H1 (cell line): ENCODE measurements at regions of chr1 and their contacts with region 1.

Region 1: DNA sequence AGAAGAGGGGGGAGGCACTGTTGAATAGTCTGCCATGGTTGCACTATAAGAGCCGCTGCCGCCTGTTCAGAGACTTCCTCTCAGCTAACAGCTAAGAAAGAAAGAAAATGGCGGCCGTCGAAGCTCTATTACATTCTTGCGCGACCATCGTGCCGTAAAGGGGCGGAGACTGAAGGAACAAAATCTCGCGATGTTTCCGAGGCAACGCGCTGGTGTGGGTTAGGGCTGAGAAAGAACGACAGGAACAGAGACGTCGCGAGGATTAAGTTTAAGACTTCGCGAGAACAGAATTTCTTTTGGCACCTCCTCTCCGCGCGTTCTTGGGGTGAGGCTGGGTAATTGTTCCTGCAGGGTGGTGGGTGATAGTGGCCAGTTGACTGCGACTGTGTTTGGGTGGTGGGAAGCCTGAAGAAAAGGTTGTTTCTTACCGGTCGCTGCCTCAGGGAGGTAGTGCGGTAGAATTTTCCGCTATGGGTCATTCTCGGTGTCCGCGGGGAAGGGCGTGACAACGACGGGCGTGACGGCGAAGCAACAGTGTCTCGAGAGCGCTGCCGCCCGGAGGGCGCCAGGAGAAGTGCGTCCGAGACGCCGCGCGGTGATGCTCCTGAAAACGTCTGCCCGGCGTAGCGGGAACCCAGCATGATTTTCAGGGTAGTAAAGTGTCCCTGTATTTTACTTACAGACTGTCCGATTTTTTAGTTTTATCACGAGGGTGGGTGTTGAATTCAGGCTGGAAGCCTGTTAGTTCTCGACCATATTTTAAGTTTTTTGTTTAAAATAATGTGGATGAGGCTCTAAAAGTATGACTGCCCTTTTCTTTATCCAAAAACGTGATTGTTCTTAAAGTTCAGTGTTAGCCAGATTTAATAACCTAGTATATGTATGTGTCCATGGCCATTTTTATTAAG is at the start of gene FUBP1:
- DNase-seq: peak; percentile 92 to 97
- H3K4me3 ChIP-seq: peak within 1 kb of the TSS; percentile 95 to 100 (median 99)
- H3K27ac ChIP-seq: peak within 1 kb of the TSS; percentile 98
- H3K4me1 ChIP-seq: peaks cover 0 to 12% (median 7%) of the 10 kb centered on the region in 4 experiments; a peak in 3 of 7 replicates
- H3K27me3 ChIP-seq: no peaks in the 10 kb centered on the region
- CTCF ChIP-seq: peak; percentile 50 to 71 (median 67)
- EP300 ChIP-seq: 0 out of 3 replicates have a peak, but pooled peaks of 1 of the 2 experiments have one; percentile 47
- POLR2A ChIP-seq: peak; percentile 86 to 98; a peak in 2 of 3 replicates
- RAD21 ChIP-seq: peak; percentile 23 to 36
- total RNA-seq, gene FUBP1: 201 and 206 TPM in 2 replicates

Region 2: GRCh38 chr1:77881061-77881460 is 98.2 kb before region 1 on chr1:
- CTCF ChIA-PET with region 1: no interaction called
- POLR2A ChIA-PET with region 1: no interaction called
- DNase-seq: no peak
- H3K4me3 ChIP-seq: no peak overlapping the region
- H3K27ac ChIP-seq: no peak overlapping the region
- H3K4me1 ChIP-seq: no peaks in the 10 kb centered on the region
- H3K27me3 ChIP-seq: no peaks in the 10 kb centered on the region
- CTCF ChIP-seq: no peak
- EP300 ChIP-seq: no peak
- POLR2A ChIP-seq: no peak
- RAD21 ChIP-seq: no peak

Region 3: GRCh38 chr1:77942400-77943140 is 36.7 kb before region 1 on chr1:
- CTCF ChIA-PET with region 1: interaction called, 3 read pairs
- POLR2A ChIA-PET with region 1: interaction called, 10 read pairs
- DNase-seq: no peak
- H3K4me3 ChIP-seq: no peak overlapping the region
- H3K27ac ChIP-seq: no peak overlapping the region
- H3K4me1 ChIP-seq: no peaks in the 10 kb centered on the region
- H3K27me3 ChIP-seq: no peaks in the 10 kb centered on the region
- CTCF ChIP-seq: no peak
- EP300 ChIP-seq: no peak
- POLR2A ChIP-seq: no peak
- RAD21 ChIP-seq: no peak

Region 4: GRCh38 chr1:77994117-77994705 is 15.0 kb after region 1 on chr1:
- CTCF ChIA-PET with region 1: interaction called, 5 read pairs
- POLR2A ChIA-PET with region 1: interaction called, 46 read pairs
- DNase-seq: no peak
- H3K4me3 ChIP-seq: no peak overlapping the region
- H3K27ac ChIP-seq: no peak overlapping the region
- H3K4me1 ChIP-seq: no peaks in the 10 kb centered on the region
- H3K27me3 ChIP-seq: no peaks in the 10 kb centered on the region
- CTCF ChIP-seq: no peak
- EP300 ChIP-seq: no peak
- POLR2A ChIP-seq: no peak
- RAD21 ChIP-seq: no peak

Region 5: DNA sequence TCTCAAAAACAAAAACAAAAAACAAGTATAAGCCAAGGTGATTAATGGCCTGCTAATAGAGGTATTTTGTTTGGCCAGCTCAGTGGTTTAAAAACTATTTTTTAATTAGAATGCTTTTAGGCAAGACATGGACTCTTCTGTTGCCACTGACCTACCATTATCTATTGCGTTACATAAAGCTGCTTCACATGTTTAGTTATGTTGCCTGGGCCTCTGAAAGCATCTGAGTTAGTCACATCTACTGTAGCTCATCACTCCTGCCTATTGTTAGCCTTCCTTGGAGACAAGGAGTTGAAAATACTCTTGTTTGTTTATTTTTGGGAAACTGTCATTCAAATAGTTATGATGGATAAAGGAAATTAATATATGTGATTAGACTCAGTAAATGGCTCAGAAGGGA is 39.8 kb after region 1 on chr1:
- CTCF ChIA-PET with region 1: no interaction called
- POLR2A ChIA-PET with region 1: no interaction called
- DNase-seq: no peak
- H3K4me3 ChIP-seq: no peak overlapping the region
- H3K27ac ChIP-seq: no peak overlapping the region
- H3K4me1 ChIP-seq: 0 out of 7 replicates have a peak, but pooled peaks cover 0 to 2% (median 0%) of the 10 kb centered on the region in 4 experiments
- H3K27me3 ChIP-seq: no peaks in the 10 kb centered on the region
- CTCF ChIP-seq: no peak
- EP300 ChIP-seq: no peak
- POLR2A ChIP-seq: no peak
- RAD21 ChIP-seq: no peak

Region 6: DNA sequence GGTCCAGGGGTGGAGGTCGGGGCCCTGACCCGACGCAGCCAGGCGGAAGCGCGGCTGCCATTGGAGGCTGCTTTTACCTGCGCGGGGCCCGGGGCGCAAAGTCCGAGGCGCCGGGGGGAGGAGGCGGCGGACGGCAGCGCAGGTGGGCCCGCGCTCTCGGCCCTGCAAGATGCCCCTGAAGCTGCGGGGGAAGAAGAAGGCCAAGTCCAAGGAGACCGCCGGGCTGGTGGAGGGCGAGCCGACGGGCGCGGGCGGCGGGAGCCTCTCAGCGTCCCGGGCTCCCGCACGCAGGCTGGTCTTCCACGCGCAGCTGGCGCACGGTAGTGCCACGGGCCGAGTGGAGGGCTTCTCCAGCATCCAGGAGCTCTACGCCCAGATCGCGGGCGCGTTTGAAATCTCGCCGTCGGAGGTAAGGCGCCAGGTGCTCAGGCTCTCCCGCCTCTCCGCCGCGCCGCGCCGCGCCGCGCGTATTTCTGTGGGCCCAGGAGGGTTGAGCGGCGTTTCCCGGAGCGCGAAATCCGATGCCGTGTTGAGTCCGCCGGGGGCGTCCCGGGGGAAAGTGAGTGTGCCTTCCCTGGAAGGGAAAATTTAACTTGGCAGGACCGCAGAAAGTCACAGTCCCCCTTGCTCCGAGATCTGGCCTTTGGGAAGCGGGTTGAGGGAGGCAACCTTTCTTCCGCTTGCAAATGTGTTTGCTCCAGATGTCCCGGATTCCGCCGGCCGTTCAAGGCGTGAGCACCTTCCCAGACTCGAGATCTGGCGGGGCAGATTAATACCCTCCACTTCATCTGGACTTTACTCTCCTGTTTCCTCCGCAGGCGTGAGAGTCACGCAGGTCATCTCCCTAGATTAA is 66.9 kb after region 1 on chr1 and contains the start of gene GIPC2:
- CTCF ChIA-PET with region 1: no interaction called
- POLR2A ChIA-PET with region 1: interaction called, 15 read pairs
- DNase-seq: peak in 1 of 2 experiments; percentile 76
- H3K4me3 ChIP-seq: peak within 1 kb of the TSS; percentile 62 to 73 (median 70)
- H3K27ac ChIP-seq: no peak within 1 kb of the TSS
- H3K4me1 ChIP-seq: peaks cover 0 to 9% (median 6%) of the 10 kb centered on the region in 4 experiments; a peak in 3 of 7 replicates
- H3K27me3 ChIP-seq: peaks cover 4 to 28% (median 24%) of the 10 kb centered on the region in 4 experiments
- CTCF ChIP-seq: no peak
- EP300 ChIP-seq: no peak
- POLR2A ChIP-seq: peak in 1 of 2 experiments; percentile 63; a peak in 2 of 3 replicates
- RAD21 ChIP-seq: no peak
- total RNA-seq, gene GIPC2: 0.69 and 1.9 TPM in 2 replicates

Region 7: GRCh38 chr1:78114034-78114956 is 135.1 kb after region 1 on chr1:
- CTCF ChIA-PET with region 1: interaction called, 20 read pairs
- POLR2A ChIA-PET with region 1: interaction called, 15 read pairs
- DNase-seq: no peak
- H3K4me3 ChIP-seq: no peak overlapping the region
- H3K27ac ChIP-seq: no peak overlapping the region
- H3K4me1 ChIP-seq: no peaks in the 10 kb centered on the region
- H3K27me3 ChIP-seq: peaks cover 0 to 3% (median 0%) of the 10 kb centered on the region in 4 experiments; a peak in 1 of 7 replicates
- CTCF ChIP-seq: peak in 2 of 3 experiments; percentile 68 to 100; a peak in 3 of 4 replicates
- EP300 ChIP-seq: no peak
- POLR2A ChIP-seq: no peak
- RAD21 ChIP-seq: peak; percentile 93 to 95